GM23248 (cell line): ENCODE measurements at regions of chr3 and their contacts with region 1.

Region 1: GRCh38 chr3:45938864-45939263 is 4.4 kb upstream of the CXCR6 start:
- DNase-seq: peak; percentile 90
- H3K4me3 ChIP-seq: no peak overlapping the region
- H3K27ac ChIP-seq: no peak overlapping the region
- H3K4me1 ChIP-seq: peaks cover 5% of the 10 kb centered on the region
- H3K27me3 ChIP-seq: no peaks in the 10 kb centered on the region

Region 2: GRCh38 chr3:45746777-45747622 is 191.9 kb before region 1 on chr3:
- in situ Hi-C with region 1: no loop called
- DNase-seq: no peak
- H3K4me3 ChIP-seq: no peak overlapping the region
- H3K27ac ChIP-seq: no peak overlapping the region
- H3K4me1 ChIP-seq: no peaks in the 10 kb centered on the region
- H3K27me3 ChIP-seq: no peaks in the 10 kb centered on the region

Region 3: DNA sequence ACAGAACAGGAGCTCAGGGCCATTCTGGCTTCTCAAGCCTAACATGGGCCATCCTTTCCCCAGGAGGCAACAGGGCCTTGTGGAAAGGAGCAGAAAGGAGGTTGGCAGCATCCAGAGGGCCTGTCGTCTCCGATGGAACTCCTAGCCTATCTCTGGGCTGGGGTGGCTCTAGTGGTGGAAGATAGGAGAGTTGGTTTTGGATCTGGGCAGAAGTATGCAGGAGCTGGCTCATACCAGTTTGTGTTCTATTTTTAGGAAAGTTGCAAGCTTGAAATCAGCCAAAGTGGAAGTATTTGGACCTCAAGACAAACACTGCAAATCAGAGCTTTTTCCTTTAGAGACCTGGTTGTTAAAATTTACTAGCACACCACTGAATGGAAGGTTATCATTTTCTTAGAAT is 123.8 kb after region 1 on chr3:
- in situ Hi-C with region 1: loop called (anchors 5 kb)
- DNase-seq: no peak
- H3K4me3 ChIP-seq: no peak overlapping the region
- H3K27ac ChIP-seq: no peak overlapping the region
- H3K4me1 ChIP-seq: no peaks in the 10 kb centered on the region
- H3K27me3 ChIP-seq: peaks cover 51% of the 10 kb centered on the region

Region 4: DNA sequence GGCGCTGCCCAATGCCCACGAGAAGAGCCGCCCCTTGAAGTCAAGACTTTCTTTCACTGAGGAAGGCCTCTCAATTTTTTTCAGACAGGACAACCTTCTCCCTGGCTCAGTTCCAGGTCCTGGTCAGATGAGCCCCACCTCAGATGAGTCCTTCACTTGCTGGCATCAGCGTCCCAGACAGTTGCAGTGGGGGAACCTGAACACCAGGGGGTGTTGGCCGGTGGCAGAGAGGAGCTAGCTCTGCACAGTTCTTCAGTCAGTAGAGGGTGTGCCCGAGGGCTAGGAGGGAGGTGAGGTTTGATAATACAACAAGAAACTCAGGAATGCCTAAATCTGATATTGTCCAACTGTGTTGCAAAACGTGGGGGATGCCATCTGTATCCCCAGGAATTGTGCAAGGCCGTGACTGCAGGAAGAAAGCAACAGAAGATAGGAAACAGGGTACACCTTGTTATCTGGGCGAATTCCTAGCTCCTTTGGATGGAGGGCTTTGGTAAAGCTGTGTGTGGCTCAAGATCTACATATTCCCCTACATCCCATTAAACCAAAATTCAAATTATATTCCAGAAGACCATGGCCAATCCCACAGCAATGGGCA is 337.7 kb after region 1 on chr3:
- in situ Hi-C with region 1: no loop called
- DNase-seq: peak; percentile 9
- H3K4me3 ChIP-seq: no peak overlapping the region
- H3K27ac ChIP-seq: no peak overlapping the region
- H3K4me1 ChIP-seq: no peaks in the 10 kb centered on the region
- H3K27me3 ChIP-seq: peaks cover 11% of the 10 kb centered on the region; the same call in 1 of the 2 replicates